ENCODE measurements at regions of chr1 and their contacts with region 1.

Region 1: GRCh38 chr1:7929637-7930036 is 11.0 kb downstream of the TNFRSF9 start:
- DNase-seq: peak in 2 of 9 experiments; percentile 49 to 79
- ATAC-seq: no peak
- H3K4me3 ChIP-seq: peak overlapping the region in 1 of 2 experiments; percentile 23
- H3K4me3 Mint-ChIP-seq: peak overlapping the region; percentile 62
- H3K27ac ChIP-seq: peak overlapping the region in 1 of 2 experiments; percentile 82
- H3K27ac Mint-ChIP-seq: peak overlapping the region; percentile 33
- H3K4me1 ChIP-seq: peaks cover 16% of the 10 kb centered on the region
- H3K4me1 Mint-ChIP-seq: peaks cover 36% of the 10 kb centered on the region
- H3K27me3 ChIP-seq: no peaks in the 10 kb centered on the region
- H3K27me3 Mint-ChIP-seq: no peaks in the 10 kb centered on the region
- CTCF ChIP-seq: no peak

Region 2: GRCh38 chr1:7975212-7975865 is 45.7 kb after region 1 on chr1:
- CTCF ChIA-PET with region 1: no interaction called
- POLR2A ChIA-PET with region 1: no interaction called
- intact Hi-C with region 1: loop called in 1 of 2 experiments (anchors 1 kb)
- DNase-seq: peak in 4 of 9 experiments; percentile 28 to 55 (median 39)
- ATAC-seq: peak; percentile 51
- H3K4me3 ChIP-seq: no peak overlapping the region
- H3K4me3 Mint-ChIP-seq: no peak overlapping the region
- H3K27ac ChIP-seq: no peak overlapping the region
- H3K27ac Mint-ChIP-seq: peak overlapping the region; percentile 64
- H3K4me1 ChIP-seq: no peaks in the 10 kb centered on the region
- H3K4me1 Mint-ChIP-seq: peaks cover 6% of the 10 kb centered on the region
- H3K27me3 ChIP-seq: no peaks in the 10 kb centered on the region
- H3K27me3 Mint-ChIP-seq: no peaks in the 10 kb centered on the region
- CTCF ChIP-seq: peak; percentile 46

Region 3: GRCh38 chr1:8137481-8138244 is 208.0 kb after region 1 on chr1:
- CTCF ChIA-PET with region 1: no interaction called
- POLR2A ChIA-PET with region 1: no interaction called
- intact Hi-C with region 1: no loop called
- DNase-seq: no peak
- ATAC-seq: no peak
- H3K4me3 ChIP-seq: no peak overlapping the region
- H3K4me3 Mint-ChIP-seq: no peak overlapping the region
- H3K27ac ChIP-seq: no peak overlapping the region
- H3K27ac Mint-ChIP-seq: no peak overlapping the region
- H3K4me1 ChIP-seq: no peaks in the 10 kb centered on the region
- H3K4me1 Mint-ChIP-seq: peaks cover 3% of the 10 kb centered on the region
- H3K27me3 ChIP-seq: peaks cover 0 to 8% of the 10 kb centered on the region in 2 experiments
- H3K27me3 Mint-ChIP-seq: peaks cover 30% of the 10 kb centered on the region
- CTCF ChIP-seq: no peak